Caco-2 (cell line): ENCODE measurements at regions of chr10 and their contacts with region 1.

Region 1: DNA sequence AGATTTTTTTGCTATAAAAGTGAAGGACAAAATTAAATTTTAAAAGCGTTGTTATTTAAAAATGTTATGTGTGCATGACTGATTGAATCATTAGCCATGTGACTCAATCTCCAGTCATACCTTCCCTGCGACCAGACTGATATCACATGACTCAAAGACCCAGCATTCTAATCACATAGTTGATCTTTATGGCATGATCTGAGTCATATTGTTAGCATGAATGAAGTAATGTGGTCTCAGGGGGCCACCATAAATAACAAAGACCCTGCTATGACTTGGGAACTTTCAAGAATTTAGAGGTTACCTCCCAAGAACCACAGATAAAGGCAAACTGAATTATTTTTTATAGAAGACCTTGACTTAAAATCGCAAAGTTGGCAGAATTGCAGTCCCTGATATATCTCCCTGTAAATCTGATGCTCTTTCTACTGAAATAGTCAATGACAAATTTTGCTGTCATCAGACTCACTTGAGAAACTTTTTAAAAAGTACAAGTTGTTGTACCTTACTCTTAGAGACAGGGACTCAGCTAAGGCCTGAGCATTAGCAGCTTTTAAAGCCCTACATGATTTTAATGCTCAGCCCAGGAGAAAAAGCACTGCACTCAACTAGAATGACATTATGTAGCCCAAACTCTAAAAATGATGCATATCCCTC is 717.3 kb downstream of the XPNPEP1 start:
- DNase-seq: no peak
- H3K4me3 ChIP-seq: no peak overlapping the region
- H3K4me3 Mint-ChIP-seq: no peak overlapping the region
- H3K27ac Mint-ChIP-seq: no peak overlapping the region
- H3K4me1 ChIP-seq: peaks cover 6% of the 10 kb centered on the region; the same call in 1 of the 2 replicates
- H3K4me1 Mint-ChIP-seq: peaks cover 4% of the 10 kb centered on the region
- H3K27me3 ChIP-seq: no peaks in the 10 kb centered on the region
- H3K27me3 Mint-ChIP-seq: no peaks in the 10 kb centered on the region
- CTCF ChIP-seq: no peak

Region 2: GRCh38 chr10:109427411-109427810 is 221.4 kb after region 1 on chr10:
- CTCF ChIA-PET with region 1: no interaction called
- POLR2A ChIA-PET with region 1: no interaction called
- intact Hi-C with region 1: loop called (anchors 5 kb)
- DNase-seq: peak in 1 of 2 experiments; percentile 12
- H3K4me3 ChIP-seq: no peak overlapping the region
- H3K4me3 Mint-ChIP-seq: no peak overlapping the region
- H3K27ac Mint-ChIP-seq: no peak overlapping the region
- H3K4me1 ChIP-seq: no peaks in the 10 kb centered on the region
- H3K4me1 Mint-ChIP-seq: no peaks in the 10 kb centered on the region
- H3K27me3 ChIP-seq: no peaks in the 10 kb centered on the region
- H3K27me3 Mint-ChIP-seq: no peaks in the 10 kb centered on the region
- CTCF ChIP-seq: peak; percentile 17 to 29